ENCODE measurements at regions of chr1 and their contacts with region 1.

Region 1: DNA sequence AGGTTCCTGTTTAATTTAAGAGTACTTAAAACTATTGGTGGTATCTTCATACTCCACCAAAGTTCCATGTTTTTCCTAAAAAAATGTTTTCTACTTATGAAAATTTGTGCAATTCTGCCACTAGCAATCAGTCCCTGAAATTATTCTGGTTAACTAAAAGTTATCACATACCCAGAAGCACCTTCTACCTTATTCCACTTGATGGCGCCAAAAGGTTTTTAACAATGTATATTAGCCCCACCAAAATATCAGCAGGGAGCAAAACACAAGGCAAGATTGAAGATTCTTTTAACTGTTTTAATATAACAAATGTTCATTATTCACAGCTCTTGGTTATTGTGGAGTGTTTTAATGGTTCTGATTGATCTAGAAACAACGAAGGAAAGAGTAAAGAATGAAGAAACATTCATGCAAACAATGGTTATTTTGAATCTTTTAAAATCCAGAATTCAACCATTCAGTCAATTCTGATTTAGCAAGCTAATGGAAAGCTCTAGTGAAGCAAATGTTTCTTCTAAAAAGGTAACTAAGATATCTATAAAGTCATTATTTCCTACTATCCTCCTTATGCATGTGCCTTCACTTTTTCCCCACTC is 67.2 kb downstream of the TTLL7 start:
- DNase-seq: peak; percentile 22 to 71 (median 44)
- ATAC-seq: peak; percentile 90
- H3K4me3 ChIP-seq: no peak overlapping the region
- H3K27ac ChIP-seq: no peak overlapping the region; the same call in 2 of the 3 replicates
- H3K4me1 ChIP-seq: peaks cover 0 to 7% of the 10 kb centered on the region in 2 experiments; a peak in 1 of 5 replicates
- H3K27me3 ChIP-seq: no peaks in the 10 kb centered on the region
- CTCF ChIP-seq: peak; percentile 54 to 79 (median 57); a peak in 4 of 6 replicates
- EP300 ChIP-seq: no peak; the same call in 1 of the 2 replicates
- POLR2A ChIP-seq: no peak
- RAD21 ChIP-seq: peak; percentile 90 to 93

Region 2: DNA sequence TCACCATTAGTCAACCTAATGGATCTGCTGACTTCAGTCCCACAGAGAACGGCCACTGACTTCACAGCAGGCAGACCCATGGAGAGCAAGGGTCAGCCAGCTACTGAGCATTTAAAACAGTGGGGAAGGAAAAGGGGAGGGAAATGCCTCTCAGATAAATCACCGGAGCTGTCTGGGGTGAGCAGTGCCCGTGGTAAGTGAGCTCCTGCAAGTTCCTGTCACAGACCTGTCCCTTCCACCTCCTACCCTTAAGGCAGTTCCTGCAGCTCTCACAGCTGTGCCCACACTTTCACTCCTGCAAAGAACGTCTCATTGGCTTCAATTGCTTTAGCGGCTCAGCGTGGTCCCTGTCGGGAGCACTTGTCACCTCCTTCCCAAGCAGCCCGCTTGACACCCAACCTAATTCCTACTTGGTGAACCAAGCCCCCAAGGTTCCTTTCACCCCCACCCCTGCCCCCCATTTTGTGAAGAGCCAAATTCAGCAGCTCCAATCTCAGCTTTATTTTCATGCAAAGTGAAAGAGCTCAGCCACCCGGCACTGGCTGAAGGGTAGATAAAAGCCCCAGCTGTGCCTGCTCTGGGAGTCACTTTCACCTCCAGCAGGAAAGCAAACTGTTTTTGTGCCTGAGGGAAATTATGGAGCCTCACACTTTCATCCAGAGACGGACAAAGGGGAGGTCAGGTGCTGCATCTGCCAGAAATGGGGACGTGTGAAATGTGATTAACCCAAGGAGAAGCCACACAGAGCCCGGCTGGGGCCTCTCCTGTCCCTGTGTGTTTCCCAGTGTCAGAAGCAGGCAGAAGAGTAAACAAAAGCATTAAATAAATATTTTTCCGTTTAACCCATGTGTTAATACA is 239.0 kb before region 1 on chr1:
- CTCF ChIA-PET with region 1: no interaction called
- POLR2A ChIA-PET with region 1: no interaction called
- in situ Hi-C with region 1: no loop called
- intact Hi-C with region 1: no loop called
- DNase-seq: no peak
- ATAC-seq: no peak
- H3K4me3 ChIP-seq: no peak overlapping the region
- H3K27ac ChIP-seq: no peak overlapping the region
- H3K4me1 ChIP-seq: no peaks in the 10 kb centered on the region
- H3K27me3 ChIP-seq: no peaks in the 10 kb centered on the region
- CTCF ChIP-seq: no peak
- EP300 ChIP-seq: no peak
- POLR2A ChIP-seq: no peak
- RAD21 ChIP-seq: no peak

Region 3: GRCh38 chr1:84122780-84123382 is 191.1 kb after region 1 on chr1:
- CTCF ChIA-PET with region 1: interaction called, 43 read pairs
- POLR2A ChIA-PET with region 1: no interaction called
- in situ Hi-C with region 1: loop called (anchors 10 kb)
- intact Hi-C with region 1: loop called (anchors 1 kb)
- DNase-seq: peak; percentile 16 to 71 (median 31)
- ATAC-seq: peak; percentile 95
- H3K4me3 ChIP-seq: no peak overlapping the region
- H3K27ac ChIP-seq: no peak overlapping the region
- H3K4me1 ChIP-seq: peaks cover 0 to 4% of the 10 kb centered on the region in 2 experiments; a peak in 2 of 5 replicates
- H3K27me3 ChIP-seq: no peaks in the 10 kb centered on the region
- CTCF ChIP-seq: peak; percentile 65 to 85 (median 65)
- EP300 ChIP-seq: no peak
- POLR2A ChIP-seq: no peak
- RAD21 ChIP-seq: peak; percentile 93 to 95

Region 4: GRCh38 chr1:84298328-84298683 is 366.6 kb after region 1 on chr1:
- CTCF ChIA-PET with region 1: no interaction called
- POLR2A ChIA-PET with region 1: no interaction called
- in situ Hi-C with region 1: no loop called
- intact Hi-C with region 1: loop called (anchors 10 kb)
- DNase-seq: peak; percentile 64 to 79 (median 72)
- ATAC-seq: peak; percentile 91
- H3K4me3 ChIP-seq: peak overlapping the region; percentile 69
- H3K27ac ChIP-seq: peak overlapping the region; percentile 83
- H3K4me1 ChIP-seq: peaks cover 14 to 31% of the 10 kb centered on the region in 2 experiments
- H3K27me3 ChIP-seq: no peaks in the 10 kb centered on the region
- CTCF ChIP-seq: no peak
- EP300 ChIP-seq: no peak
- POLR2A ChIP-seq: peak; percentile 83
- RAD21 ChIP-seq: no peak

Region 5: GRCh38 chr1:84433258-84434080 is 501.7 kb after region 1 on chr1:
- CTCF ChIA-PET with region 1: interaction called, 6 read pairs
- POLR2A ChIA-PET with region 1: interaction called, 3 read pairs
- in situ Hi-C with region 1: loop called (anchors 10 kb)
- intact Hi-C with region 1: loop called (anchors 1 kb)
- DNase-seq: peak; percentile 40 to 72 (median 48)
- ATAC-seq: peak; percentile 74; the same call in 2 of the 3 replicates
- H3K4me3 ChIP-seq: no peak overlapping the region
- H3K27ac ChIP-seq: no peak overlapping the region
- H3K4me1 ChIP-seq: no peaks in the 10 kb centered on the region
- H3K27me3 ChIP-seq: no peaks in the 10 kb centered on the region
- CTCF ChIP-seq: peak; percentile 53 to 78 (median 68); a peak in 5 of 6 replicates
- EP300 ChIP-seq: no peak
- POLR2A ChIP-seq: no peak
- RAD21 ChIP-seq: peak; percentile 90 to 94

Region 6: GRCh38 chr1:84742653-84743052 is 810.9 kb after region 1 on chr1:
- CTCF ChIA-PET with region 1: no interaction called
- POLR2A ChIA-PET with region 1: no interaction called
- in situ Hi-C with region 1: loop called (anchors 10 kb)
- intact Hi-C with region 1: no loop called
- DNase-seq: no peak
- ATAC-seq: no peak
- H3K4me3 ChIP-seq: no peak overlapping the region
- H3K27ac ChIP-seq: no peak overlapping the region
- H3K4me1 ChIP-seq: no peaks in the 10 kb centered on the region
- H3K27me3 ChIP-seq: 0 out of 5 replicates have a peak, but pooled peaks cover 0 to 6% of the 10 kb centered on the region in 2 experiments
- CTCF ChIP-seq: no peak
- EP300 ChIP-seq: no peak
- POLR2A ChIP-seq: no peak
- RAD21 ChIP-seq: no peak

Region 7: GRCh38 chr1:84753516-84754385 is 822.0 kb after region 1 on chr1:
- CTCF ChIA-PET with region 1: interaction called, 4 read pairs
- POLR2A ChIA-PET with region 1: no interaction called
- in situ Hi-C with region 1: loop called (anchors 10 kb)
- intact Hi-C with region 1: loop called (anchors 2 kb)
- DNase-seq: peak; percentile 66 to 78 (median 76)
- ATAC-seq: peak; percentile 94
- H3K4me3 ChIP-seq: no peak overlapping the region
- H3K27ac ChIP-seq: no peak overlapping the region
- H3K4me1 ChIP-seq: no peaks in the 10 kb centered on the region; a peak in 1 of 5 replicates
- H3K27me3 ChIP-seq: peaks cover 0 to 4% of the 10 kb centered on the region in 2 experiments; a peak in 2 of 5 replicates
- CTCF ChIP-seq: peak; percentile 95 to 97 (median 96)
- EP300 ChIP-seq: no peak
- POLR2A ChIP-seq: no peak
- RAD21 ChIP-seq: peak; percentile 95 to 98

Region 8: GRCh38 chr1:84772428-84772943 is 840.7 kb after region 1 on chr1:
- CTCF ChIA-PET with region 1: no interaction called
- POLR2A ChIA-PET with region 1: no interaction called
- in situ Hi-C with region 1: no loop called
- intact Hi-C with region 1: loop called (anchors 5 kb)
- DNase-seq: peak; percentile 78 to 87 (median 82)
- ATAC-seq: peak; percentile 96
- H3K4me3 ChIP-seq: no peak overlapping the region
- H3K27ac ChIP-seq: no peak overlapping the region
- H3K4me1 ChIP-seq: no peaks in the 10 kb centered on the region
- H3K27me3 ChIP-seq: peaks cover 2 to 10% of the 10 kb centered on the region in 2 experiments; a peak in 2 of 5 replicates
- CTCF ChIP-seq: peak; percentile 82 to 92 (median 89)
- EP300 ChIP-seq: no peak
- POLR2A ChIP-seq: no peak
- RAD21 ChIP-seq: peak; percentile 84 to 89

Measured in K562 (cell line).